ENCODE measurements at regions of chr4 and their contacts with region 1.

Region 1: DNA sequence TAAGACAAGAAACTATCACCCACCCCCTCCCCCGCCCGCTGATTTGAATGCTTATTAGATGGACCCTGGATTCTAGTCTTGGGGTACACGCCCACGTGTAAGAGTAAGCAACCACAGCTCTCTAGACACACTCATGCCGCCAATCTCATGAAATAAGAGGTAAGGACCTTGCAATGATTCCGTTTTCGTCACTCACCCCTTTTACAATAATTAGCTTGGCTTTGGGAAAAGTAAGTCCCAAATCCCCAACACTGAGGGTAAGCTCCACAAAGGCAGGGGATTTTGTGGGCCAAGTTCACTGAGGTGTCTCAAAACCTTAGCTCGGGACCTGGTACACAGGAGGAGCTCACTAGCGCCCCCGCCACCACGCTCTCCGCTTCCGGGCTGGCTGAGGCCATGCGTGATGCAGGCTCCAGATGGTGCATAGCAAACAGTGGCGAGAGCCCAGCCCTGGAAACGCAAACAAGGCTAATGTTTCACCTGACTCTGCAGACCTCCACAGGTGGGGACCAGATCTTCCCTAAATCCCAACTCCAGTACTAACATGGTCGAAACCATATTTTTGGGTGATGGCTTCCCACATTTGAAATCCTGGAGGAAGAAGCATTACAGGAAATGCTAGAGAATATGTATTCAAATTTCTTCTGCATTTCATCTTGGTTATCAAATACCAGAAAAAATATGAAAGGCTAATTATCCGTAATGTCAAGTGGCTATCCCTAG is 4.1 kb downstream of the PLAC8 start:
- DNase-seq: peak; percentile 75 to 80
- H3K4me3 ChIP-seq: peak overlapping the region; percentile 62
- H3K27ac ChIP-seq: peak overlapping the region; percentile 75
- H3K4me1 ChIP-seq: peaks cover 38% of the 10 kb centered on the region
- H3K27me3 ChIP-seq: no peaks in the 10 kb centered on the region
- CTCF ChIP-seq: peak; percentile 64

Region 2: GRCh38 chr4:83083925-83084475 is 26.4 kb before region 1 on chr4:
- CTCF ChIA-PET with region 1: no interaction called
- POLR2A ChIA-PET with region 1: interaction called, 17 read pairs
- intact Hi-C with region 1: no loop called
- DNase-seq: no peak
- H3K4me3 ChIP-seq: no peak overlapping the region
- H3K27ac ChIP-seq: no peak overlapping the region
- H3K4me1 ChIP-seq: no peaks in the 10 kb centered on the region
- H3K27me3 ChIP-seq: no peaks in the 10 kb centered on the region
- CTCF ChIP-seq: no peak

Region 3: GRCh38 chr4:83150653-83151330 is 40.4 kb after region 1 on chr4:
- CTCF ChIA-PET with region 1: no interaction called
- POLR2A ChIA-PET with region 1: no interaction called
- intact Hi-C with region 1: loop called (anchors 2 kb)
- DNase-seq: peak; percentile 10 to 43
- H3K4me3 ChIP-seq: no peak overlapping the region
- H3K27ac ChIP-seq: peak overlapping the region; percentile 12; the same call in 1 of the 2 replicates
- H3K4me1 ChIP-seq: peaks cover 22% of the 10 kb centered on the region
- H3K27me3 ChIP-seq: no peaks in the 10 kb centered on the region
- CTCF ChIP-seq: no peak

Region 4: GRCh38 chr4:83252782-83253405 is 142.5 kb after region 1 on chr4:
- CTCF ChIA-PET with region 1: no interaction called
- POLR2A ChIA-PET with region 1: no interaction called
- intact Hi-C with region 1: loop called (anchors 2 kb)
- DNase-seq: peak; percentile 39 to 51
- H3K4me3 ChIP-seq: no peak overlapping the region
- H3K27ac ChIP-seq: no peak overlapping the region
- H3K4me1 ChIP-seq: peaks cover 34% of the 10 kb centered on the region
- H3K27me3 ChIP-seq: no peaks in the 10 kb centered on the region
- CTCF ChIP-seq: peak; percentile 69

Measured in PC-9 (cell line).